Naive thymus-derived CD4-positive, alpha-beta T cell (primary cell): ENCODE measurements at regions of chr7 and their contacts with region 1.

Region 1: GRCh38 chr7:50272808-50273207 is 31.7 kb upstream of the IKZF1 start:
- DNase-seq: no peak
- ATAC-seq: no peak
- H3K4me3 ChIP-seq: no peak overlapping the region
- H3K4me3 Mint-ChIP-seq: peak overlapping the region in 3 of 10 donors; percentile 7 to 63 (median 23)
- H3K27ac ChIP-seq: no peak overlapping the region
- H3K27ac Mint-ChIP-seq: peak overlapping the region in 8 of 9 donors; percentile 6 to 99 (median 76)
- H3K4me1 ChIP-seq: peaks cover 31 to 73% of the 10 kb centered on the region in 2 donors
- H3K4me1 Mint-ChIP-seq: peaks cover 48 to 94% (median 83%) of the 10 kb centered on the region in 7 donors
- H3K27me3 ChIP-seq: no peaks in the 10 kb centered on the region
- H3K27me3 Mint-ChIP-seq: no peaks in the 10 kb centered on the region

Region 2: DNA sequence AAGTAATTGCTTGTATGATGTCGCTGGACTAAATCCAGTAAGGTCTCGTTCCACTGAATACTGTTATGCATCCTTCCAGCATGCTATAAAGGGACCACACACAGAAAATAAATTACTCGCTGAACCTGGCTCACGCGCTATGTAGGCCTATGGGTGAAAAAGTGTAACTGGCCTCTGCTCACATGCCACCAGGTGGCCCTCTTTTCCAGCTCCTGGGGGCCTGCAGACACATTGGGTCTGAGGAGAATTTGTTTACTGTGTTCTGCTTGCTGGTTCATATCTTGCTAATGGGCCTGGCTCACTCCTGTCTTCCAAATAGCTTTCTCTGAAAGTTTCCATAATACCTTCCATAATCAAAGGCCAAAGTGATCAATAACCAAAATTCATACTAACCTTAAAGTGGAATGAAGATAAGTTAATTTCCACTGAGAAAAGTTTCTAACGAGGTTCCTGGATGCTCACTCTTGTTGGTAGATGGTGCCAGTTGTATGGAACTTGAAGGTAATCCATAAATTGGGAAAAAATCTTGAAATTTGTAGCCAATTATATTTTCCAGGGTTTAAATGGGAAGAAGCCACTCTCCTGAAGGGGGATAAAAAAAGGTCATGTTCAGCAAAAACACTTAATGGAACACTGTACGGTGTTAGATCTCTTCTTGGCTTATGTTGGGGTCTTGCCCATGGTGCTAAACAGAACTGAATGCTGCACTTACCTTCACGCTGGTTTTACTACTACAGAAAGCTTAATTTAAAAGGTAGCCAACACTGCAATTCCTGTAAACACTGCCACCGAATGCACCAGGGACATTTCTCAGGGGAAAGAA is 152.8 kb before region 1 on chr7:
- CTCF ChIA-PET with region 1: no interaction called
- POLR2A ChIA-PET with region 1: no interaction called
- intact Hi-C with region 1: no loop called
- DNase-seq: peak in 7 of 9 donors; percentile 10 to 44 (median 23)
- ATAC-seq: peak; percentile 54
- H3K4me3 ChIP-seq: no peak overlapping the region
- H3K4me3 Mint-ChIP-seq: no peak overlapping the region
- H3K27ac ChIP-seq: no peak overlapping the region
- H3K27ac Mint-ChIP-seq: no peak overlapping the region
- H3K4me1 ChIP-seq: no peaks in the 10 kb centered on the region
- H3K4me1 Mint-ChIP-seq: no peaks in the 10 kb centered on the region
- H3K27me3 ChIP-seq: no peaks in the 10 kb centered on the region
- H3K27me3 Mint-ChIP-seq: peaks cover 0 to 49% (median 0%) of the 10 kb centered on the region in 5 donors

Region 3: DNA sequence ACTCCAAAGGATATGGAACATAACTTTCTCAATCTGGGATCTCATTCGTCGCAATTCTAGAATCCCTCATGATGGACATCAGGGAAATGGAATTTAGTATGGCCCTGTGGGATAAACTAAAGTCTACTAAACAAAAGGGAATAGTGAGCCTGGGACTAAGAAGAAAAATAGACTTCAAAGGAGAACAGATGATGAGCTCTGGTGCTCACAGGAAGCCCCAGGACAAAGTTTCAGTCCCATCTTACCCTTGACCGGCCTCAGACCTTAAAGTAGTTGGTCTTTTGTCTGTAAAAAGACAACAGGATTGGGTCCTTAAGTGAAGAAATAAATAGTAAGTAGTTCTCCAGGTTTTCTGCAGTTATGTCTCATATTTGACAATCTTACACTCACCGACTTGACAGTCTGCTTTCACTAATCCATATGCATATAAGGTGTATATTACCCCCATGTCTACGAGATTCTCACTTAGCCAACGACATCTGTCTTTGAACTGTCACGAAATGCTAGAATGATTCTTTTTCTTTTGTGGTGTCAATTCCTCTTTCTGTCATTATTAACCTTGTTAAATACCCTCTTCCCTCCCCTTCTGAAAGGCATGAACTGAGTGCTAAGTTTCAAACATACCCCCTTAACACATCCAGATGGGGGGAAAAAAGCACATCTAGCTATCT is 20.8 kb after region 1 on chr7:
- CTCF ChIA-PET with region 1: interaction called, 5 read pairs
- POLR2A ChIA-PET with region 1: interaction called, 1,000 read pairs
- intact Hi-C with region 1: loop called in 1 of 2 experiments (anchors 2 kb)
- DNase-seq: no peak
- ATAC-seq: no peak
- H3K4me3 ChIP-seq: no peak overlapping the region
- H3K4me3 Mint-ChIP-seq: no peak overlapping the region
- H3K27ac ChIP-seq: no peak overlapping the region
- H3K27ac Mint-ChIP-seq: peak overlapping the region in 1 of 9 donors; percentile 26
- H3K4me1 ChIP-seq: peaks cover 0 to 9% of the 10 kb centered on the region in 2 donors
- H3K4me1 Mint-ChIP-seq: peaks cover 15 to 65% (median 43%) of the 10 kb centered on the region in 7 donors
- H3K27me3 ChIP-seq: no peaks in the 10 kb centered on the region
- H3K27me3 Mint-ChIP-seq: peaks cover 0 to 7% (median 0%) of the 10 kb centered on the region in 5 donors

Region 4: DNA sequence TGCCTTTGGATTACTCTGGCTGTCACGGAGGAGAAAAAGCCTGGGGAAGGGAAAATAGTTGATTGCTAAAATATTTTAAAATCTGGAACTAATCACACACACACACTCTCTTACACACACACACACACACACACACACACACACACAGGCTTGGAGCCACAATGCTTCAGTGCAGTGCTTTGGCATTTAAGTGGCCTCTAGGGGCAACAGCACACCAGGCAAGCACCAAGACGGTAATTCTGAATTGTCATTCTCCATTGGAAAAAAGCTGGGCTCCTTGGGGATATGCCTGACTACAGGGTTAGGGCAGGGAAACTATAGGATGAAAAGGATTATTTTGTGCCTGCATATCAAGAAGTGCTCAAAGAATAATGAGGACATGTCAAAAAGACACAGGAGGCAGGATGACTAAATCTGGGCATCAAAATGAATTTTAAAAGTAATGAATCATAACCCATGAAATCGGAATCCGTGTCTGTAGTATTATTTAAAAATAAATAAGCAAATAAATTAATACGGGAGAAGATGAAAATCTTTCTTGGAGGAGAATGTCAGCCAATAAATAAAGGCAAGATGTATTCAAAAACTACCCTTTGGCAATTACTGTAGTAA is 322.8 kb after region 1 on chr7:
- CTCF ChIA-PET with region 1: no interaction called
- POLR2A ChIA-PET with region 1: no interaction called
- intact Hi-C with region 1: no loop called
- DNase-seq: no peak
- ATAC-seq: peak; percentile 56
- H3K4me3 ChIP-seq: no peak overlapping the region
- H3K4me3 Mint-ChIP-seq: peak overlapping the region in 1 of 10 donors; percentile 29
- H3K27ac ChIP-seq: no peak overlapping the region
- H3K27ac Mint-ChIP-seq: no peak overlapping the region
- H3K4me1 ChIP-seq: no peaks in the 10 kb centered on the region
- H3K4me1 Mint-ChIP-seq: peaks cover 0 to 30% (median 0%) of the 10 kb centered on the region in 7 donors
- H3K27me3 ChIP-seq: no peaks in the 10 kb centered on the region
- H3K27me3 Mint-ChIP-seq: peaks cover 0 to 12% (median 1%) of the 10 kb centered on the region in 5 donors

Region 5: GRCh38 chr7:50653126-50653864 is 380.5 kb after region 1 on chr7:
- CTCF ChIA-PET with region 1: no interaction called
- POLR2A ChIA-PET with region 1: no interaction called
- intact Hi-C with region 1: no loop called
- DNase-seq: peak in 1 of 9 donors; percentile 8
- ATAC-seq: peak; percentile 41
- H3K4me3 ChIP-seq: no peak overlapping the region
- H3K4me3 Mint-ChIP-seq: no peak overlapping the region
- H3K27ac ChIP-seq: no peak overlapping the region
- H3K27ac Mint-ChIP-seq: peak overlapping the region in 1 of 9 donors; percentile 17
- H3K4me1 ChIP-seq: no peaks in the 10 kb centered on the region
- H3K4me1 Mint-ChIP-seq: peaks cover 0 to 3% (median 0%) of the 10 kb centered on the region in 7 donors
- H3K27me3 ChIP-seq: no peaks in the 10 kb centered on the region
- H3K27me3 Mint-ChIP-seq: peaks cover 0 to 16% (median 0%) of the 10 kb centered on the region in 5 donors